Transverse colon (tissue), 4 donors: ENCODE measurements at regions of chr9 and their contacts with region 1.

Region 1: DNA sequence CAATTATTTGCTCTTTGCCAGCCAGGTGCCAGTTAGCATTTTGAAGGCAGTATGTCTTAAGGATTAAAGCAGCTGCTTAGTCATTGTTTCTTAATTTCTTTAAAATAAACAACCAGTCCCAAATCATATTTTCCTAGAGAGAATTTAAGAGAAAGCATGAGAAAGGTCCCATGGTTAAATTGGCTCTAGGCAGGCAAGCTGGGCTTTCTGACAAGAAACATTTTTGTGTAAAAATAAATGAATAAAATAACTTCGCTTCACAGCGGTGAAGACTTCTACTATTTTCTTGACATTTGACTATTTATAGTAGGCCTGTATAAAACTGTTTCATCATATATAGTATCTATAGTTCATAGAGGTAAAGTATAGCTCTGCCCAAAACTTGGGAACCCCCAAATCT is 617.7 kb upstream of the C9orf72 start:
- DNase-seq: no peak
- H3K4me3 ChIP-seq: no peak overlapping the region
- H3K27ac ChIP-seq: no peak overlapping the region
- H3K4me1 ChIP-seq: no peaks in the 10 kb centered on the region
- H3K27me3 ChIP-seq: no peaks in the 10 kb centered on the region
- CTCF ChIP-seq: no peak
- EP300 ChIP-seq: no peak
- POLR2A ChIP-seq: no peak

Region 2: GRCh38 chr9:27880156-27880555 is 310.8 kb before region 1 on chr9:
- in situ Hi-C with region 1: no loop called
- intact Hi-C with region 1: no loop called
- DNase-seq: no peak
- H3K4me3 ChIP-seq: no peak overlapping the region
- H3K27ac ChIP-seq: no peak overlapping the region
- H3K4me1 ChIP-seq: no peaks in the 10 kb centered on the region
- H3K27me3 ChIP-seq: no peaks in the 10 kb centered on the region
- CTCF ChIP-seq: no peak
- EP300 ChIP-seq: no peak
- POLR2A ChIP-seq: no peak

Region 3: DNA sequence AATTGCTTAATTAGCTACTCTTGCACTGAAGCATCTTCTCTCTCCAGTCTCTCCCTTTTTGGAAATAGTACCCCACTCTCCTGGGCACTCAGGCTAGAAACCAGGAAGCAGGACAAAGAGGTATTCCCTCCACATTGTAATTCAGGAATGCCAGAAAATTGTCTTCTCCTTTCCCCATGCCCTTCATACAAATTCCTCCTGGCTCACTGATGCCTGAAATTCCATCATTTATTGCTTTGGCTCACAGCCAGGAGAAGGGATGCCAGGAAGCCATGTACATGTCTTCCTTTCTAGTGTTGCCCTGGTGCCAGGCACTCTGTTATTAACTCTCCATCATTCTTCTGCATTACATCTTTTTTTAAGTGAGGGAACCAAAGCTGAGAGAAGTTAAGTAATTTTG is 98.8 kb after region 1 on chr9:
- in situ Hi-C with region 1: loop called in 1 of 4 experiments (anchors 25 kb)
- intact Hi-C with region 1: no loop called
- DNase-seq: no peak
- H3K4me3 ChIP-seq: no peak overlapping the region
- H3K27ac ChIP-seq: no peak overlapping the region
- H3K4me1 ChIP-seq: no peaks in the 10 kb centered on the region
- H3K27me3 ChIP-seq: no peaks in the 10 kb centered on the region
- CTCF ChIP-seq: no peak
- EP300 ChIP-seq: no peak
- POLR2A ChIP-seq: no peak